A673 (cell line): ENCODE measurements at regions of chr2 and their contacts with region 1.

Region 1: DNA sequence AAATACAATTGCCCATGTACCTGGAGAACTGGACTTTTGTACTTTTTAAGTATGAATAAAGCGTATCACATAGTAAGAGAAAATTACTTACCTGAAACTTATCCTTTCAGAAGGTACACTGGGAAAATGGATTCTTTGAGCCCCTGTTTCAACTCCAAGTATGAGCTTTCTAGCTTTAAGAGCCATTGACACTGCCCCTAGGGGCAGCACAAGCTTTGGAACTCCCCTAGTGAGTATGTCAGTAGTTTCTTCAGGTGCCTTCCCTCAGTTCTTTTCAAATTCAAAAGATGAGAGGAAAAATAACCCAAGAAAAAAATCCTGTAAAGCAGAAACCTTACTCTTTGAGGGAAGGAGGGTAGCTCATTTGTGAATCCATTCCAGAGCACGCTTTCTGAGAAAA is 124.1 kb downstream of the MEMO1 start:
- DNase-seq: peak; percentile 26
- H3K4me3 ChIP-seq: no peak overlapping the region
- H3K27ac ChIP-seq: no peak overlapping the region
- H3K4me1 ChIP-seq: peaks cover 17% of the 10 kb centered on the region
- H3K27me3 ChIP-seq: no peaks in the 10 kb centered on the region
- CTCF ChIP-seq: peak; percentile 57

Region 2: GRCh38 chr2:32277363-32277673 is 390.6 kb after region 1 on chr2:
- CTCF ChIA-PET with region 1: interaction called, 12 read pairs
- POLR2A ChIA-PET with region 1: no interaction called
- intact Hi-C with region 1: no loop called
- DNase-seq: no peak
- H3K4me3 ChIP-seq: peak overlapping the region; percentile 99
- H3K27ac ChIP-seq: peak overlapping the region; percentile 76
- H3K4me1 ChIP-seq: no peaks in the 10 kb centered on the region
- H3K27me3 ChIP-seq: no peaks in the 10 kb centered on the region
- CTCF ChIP-seq: no peak